Natural killer cell (primary cell): ENCODE measurements at regions of chr2 and their contacts with region 1.

Region 1: GRCh38 chr2:233711312-233712008 is 1.2 kb upstream of the UGT1A5 start:
- DNase-seq: peak; percentile 58 to 76
- ATAC-seq: peak; percentile 61 to 77 (median 61)
- H3K4me3 ChIP-seq: no peak overlapping the region
- H3K4me3 Mint-ChIP-seq: no peak overlapping the region
- H3K27ac ChIP-seq: no peak overlapping the region
- H3K27ac Mint-ChIP-seq: no peak overlapping the region
- H3K4me1 ChIP-seq: no peaks in the 10 kb centered on the region
- H3K4me1 Mint-ChIP-seq: no peaks in the 10 kb centered on the region
- H3K27me3 ChIP-seq: no peaks in the 10 kb centered on the region
- H3K27me3 Mint-ChIP-seq: peaks cover 29 to 40% of the 10 kb centered on the region in 2 donors
- CTCF ChIP-seq: peak; percentile 83

Region 2: DNA sequence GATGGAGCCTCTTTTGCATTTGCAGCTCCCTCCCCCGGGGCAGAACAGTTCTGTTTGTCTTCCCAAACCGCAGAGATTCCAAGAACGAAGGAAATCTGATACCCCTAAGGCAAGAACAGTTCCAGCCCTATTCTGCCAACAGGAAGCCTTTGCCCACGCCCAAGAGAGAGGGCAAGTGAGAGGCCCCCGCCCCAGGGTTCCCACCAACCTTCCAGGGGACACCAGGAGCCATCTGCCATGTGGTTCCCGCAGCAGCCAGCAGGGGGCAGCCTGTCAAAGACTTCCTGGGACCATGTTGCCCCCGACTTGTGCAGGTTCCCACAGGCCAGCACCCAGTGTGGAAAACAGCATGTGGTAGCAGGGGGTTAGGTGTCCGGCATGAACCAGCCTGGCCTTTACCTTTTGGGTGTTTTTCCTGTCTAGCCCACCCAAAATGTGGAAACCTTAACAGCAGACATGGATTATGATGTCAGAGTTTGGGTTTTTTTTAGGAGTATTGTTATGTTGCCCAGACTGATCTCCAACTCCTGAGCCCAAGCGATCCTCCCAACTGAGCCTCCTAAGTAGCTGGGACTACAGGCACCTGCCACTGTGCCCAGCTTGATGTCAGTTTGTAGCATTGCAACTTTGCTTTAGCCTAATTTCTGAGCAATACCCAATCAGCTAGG is 1099.8 kb before region 1 on chr2:
- intact Hi-C with region 1: loop called (anchors 2 kb)
- DNase-seq: peak; percentile 64 to 77
- ATAC-seq: peak; percentile 62 to 86 (median 77)
- H3K4me3 ChIP-seq: no peak overlapping the region
- H3K4me3 Mint-ChIP-seq: no peak overlapping the region
- H3K27ac ChIP-seq: no peak overlapping the region
- H3K27ac Mint-ChIP-seq: no peak overlapping the region
- H3K4me1 ChIP-seq: no peaks in the 10 kb centered on the region
- H3K4me1 Mint-ChIP-seq: no peaks in the 10 kb centered on the region
- H3K27me3 ChIP-seq: no peaks in the 10 kb centered on the region
- H3K27me3 Mint-ChIP-seq: peaks cover 0 to 2% of the 10 kb centered on the region in 2 donors
- CTCF ChIP-seq: peak; percentile 83

Region 3: GRCh38 chr2:232854082-232854481 is 857.4 kb before region 1 on chr2:
- intact Hi-C with region 1: loop called (anchors 5 kb)
- DNase-seq: no peak
- ATAC-seq: no peak
- H3K4me3 ChIP-seq: no peak overlapping the region
- H3K4me3 Mint-ChIP-seq: no peak overlapping the region
- H3K27ac ChIP-seq: no peak overlapping the region
- H3K27ac Mint-ChIP-seq: peak overlapping the region in 1 of 2 donors; percentile 73
- H3K4me1 ChIP-seq: no peaks in the 10 kb centered on the region
- H3K4me1 Mint-ChIP-seq: peaks cover 3 to 5% of the 10 kb centered on the region in 2 donors
- H3K27me3 ChIP-seq: no peaks in the 10 kb centered on the region
- H3K27me3 Mint-ChIP-seq: no peaks in the 10 kb centered on the region
- CTCF ChIP-seq: no peak